ENCODE measurements at regions of chr9 and their contacts with region 1.

Region 1: DNA sequence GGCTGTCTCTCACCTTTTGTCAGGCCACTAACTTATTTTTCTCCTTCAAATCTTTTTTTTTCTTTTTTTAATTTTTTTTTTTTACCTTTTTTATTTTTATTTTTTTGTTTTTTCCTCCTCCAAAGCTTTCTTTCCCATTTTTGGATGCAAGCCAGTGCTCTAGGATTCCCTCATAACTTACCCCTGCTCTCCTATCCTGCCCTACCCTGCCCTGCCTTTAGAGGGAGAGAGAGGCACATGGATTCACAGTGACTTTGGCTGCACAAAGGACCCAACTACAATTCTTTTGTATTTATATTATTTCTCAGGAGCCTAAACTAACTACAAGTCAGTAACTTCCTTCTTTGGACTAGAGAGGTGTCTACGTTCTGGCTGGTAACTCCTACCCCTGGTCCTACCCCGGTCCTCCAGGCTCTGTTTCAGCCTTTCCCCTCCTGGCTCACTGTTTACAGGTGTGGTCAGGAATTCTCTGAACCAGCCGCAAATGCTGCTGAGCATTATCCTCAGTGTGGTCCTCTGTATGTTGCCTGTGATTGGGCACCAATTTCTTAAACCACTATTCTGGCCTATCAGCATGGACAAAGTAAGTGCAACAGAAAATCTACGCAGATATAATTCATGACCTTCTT is 8.4 kb upstream of the RUSC2 start:
- DNase-seq: no peak
- ATAC-seq: peak; percentile 66
- H3K4me3 Mint-ChIP-seq: no peak overlapping the region
- H3K27ac Mint-ChIP-seq: no peak overlapping the region
- H3K4me1 Mint-ChIP-seq: no peaks in the 10 kb centered on the region
- H3K27me3 Mint-ChIP-seq: peaks cover 10% of the 10 kb centered on the region
- CTCF ChIP-seq: no peak

Region 2: DNA sequence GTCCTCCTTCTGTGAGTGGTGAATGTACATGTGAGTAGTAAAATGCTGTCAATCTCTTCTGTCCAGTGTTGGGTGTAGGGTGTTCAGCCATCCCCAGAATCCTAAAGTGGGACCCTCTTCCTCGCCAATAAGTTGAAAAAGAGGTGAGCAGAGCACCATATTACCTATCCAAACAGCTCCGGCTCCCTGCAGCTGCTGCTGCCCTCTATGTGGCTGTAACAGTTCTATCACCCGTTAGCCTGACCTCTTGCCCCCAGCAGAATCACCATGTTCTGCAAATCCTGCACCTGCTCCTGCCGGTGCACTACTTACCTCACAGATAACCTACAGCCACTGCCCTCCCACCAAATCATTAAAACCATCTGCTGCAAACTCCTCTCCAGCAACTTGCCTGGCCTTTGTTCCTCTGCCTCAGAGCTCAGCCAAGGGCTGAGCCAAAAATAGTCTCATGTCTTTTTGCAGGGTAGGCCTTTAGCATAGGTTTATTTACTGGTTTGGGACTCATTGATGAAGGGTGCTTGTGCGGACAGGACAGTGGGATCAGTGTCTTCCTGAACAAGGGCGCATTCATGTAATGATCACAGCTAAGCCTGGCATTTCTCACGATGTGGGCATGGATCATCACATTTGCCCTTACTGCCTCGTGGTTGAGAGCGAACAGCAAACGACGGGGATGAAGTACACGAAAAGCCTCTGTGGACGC is 721.9 kb before region 1 on chr9:
- CTCF ChIA-PET with region 1: interaction called, 3 read pairs
- POLR2A ChIA-PET with region 1: no interaction called
- intact Hi-C with region 1: loop called (anchors 5 kb)
- DNase-seq: no peak
- ATAC-seq: no peak
- H3K4me3 Mint-ChIP-seq: no peak overlapping the region
- H3K27ac Mint-ChIP-seq: no peak overlapping the region
- H3K4me1 Mint-ChIP-seq: no peaks in the 10 kb centered on the region
- H3K27me3 Mint-ChIP-seq: peaks cover 31% of the 10 kb centered on the region
- CTCF ChIP-seq: no peak

Region 3: DNA sequence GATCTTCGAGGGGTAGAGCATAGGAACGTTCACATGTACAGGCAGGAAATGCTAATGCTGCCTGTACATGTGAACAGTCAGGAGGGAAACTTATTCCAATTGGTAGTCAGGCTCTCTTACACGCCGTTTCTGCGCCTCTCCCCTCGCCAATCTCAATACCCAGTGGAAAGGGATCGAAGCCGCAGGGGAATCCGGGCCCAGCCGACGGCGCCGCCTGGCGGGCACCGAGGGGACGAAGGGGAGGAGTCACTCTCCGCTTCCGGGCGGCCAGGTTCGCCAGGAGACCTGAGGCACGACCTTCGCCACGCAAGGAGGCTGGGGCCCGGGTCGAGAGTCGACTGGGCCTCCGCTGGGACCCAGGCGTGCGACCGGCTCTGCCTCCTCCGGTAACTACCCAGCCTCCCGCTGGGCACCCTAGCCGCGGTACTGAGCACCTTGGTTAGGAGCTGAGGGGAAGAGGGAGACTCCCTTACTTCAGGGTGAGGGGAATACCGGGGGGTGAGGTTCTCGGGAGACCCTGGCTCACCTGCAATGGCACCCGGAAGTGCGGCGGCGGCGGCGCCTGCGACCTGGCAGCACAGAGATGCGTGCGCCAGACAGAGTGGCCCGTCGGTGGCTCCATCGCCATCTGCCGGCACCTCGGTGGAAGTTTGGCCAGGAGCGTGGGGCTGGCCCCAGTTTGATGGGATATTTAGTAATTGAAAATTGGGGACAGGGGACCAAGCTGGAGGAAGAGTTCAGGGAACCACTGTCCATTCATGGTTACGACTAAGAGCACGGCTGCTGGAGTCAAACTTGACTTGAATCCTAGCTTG is 385.2 kb before region 1 on chr9 and contains the start of gene PIGO:
- CTCF ChIA-PET with region 1: no interaction called
- POLR2A ChIA-PET with region 1: no interaction called
- intact Hi-C with region 1: loop called (anchors 1 kb)
- DNase-seq: peak; percentile 81
- ATAC-seq: peak; percentile 92
- H3K4me3 Mint-ChIP-seq: peak within 1 kb of the TSS; percentile 87
- H3K27ac Mint-ChIP-seq: peak within 1 kb of the TSS; percentile 93
- H3K4me1 Mint-ChIP-seq: peaks cover 30% of the 10 kb centered on the region
- H3K27me3 Mint-ChIP-seq: no peaks in the 10 kb centered on the region
- CTCF ChIP-seq: peak; percentile 60
- total RNA-seq, gene PIGO: 30.4 and 34.1 TPM in 2 replicates

Region 4: GRCh38 chr9:35395076-35395705 is 86.3 kb before region 1 on chr9:
- CTCF ChIA-PET with region 1: no interaction called
- POLR2A ChIA-PET with region 1: no interaction called
- intact Hi-C with region 1: no loop called
- DNase-seq: no peak
- ATAC-seq: no peak
- H3K4me3 Mint-ChIP-seq: no peak overlapping the region
- H3K27ac Mint-ChIP-seq: no peak overlapping the region
- H3K4me1 Mint-ChIP-seq: no peaks in the 10 kb centered on the region
- H3K27me3 Mint-ChIP-seq: peaks cover 6% of the 10 kb centered on the region
- CTCF ChIP-seq: no peak

Region 5: GRCh38 chr9:35423499-35423898 is 58.0 kb before region 1 on chr9:
- CTCF ChIA-PET with region 1: no interaction called
- POLR2A ChIA-PET with region 1: no interaction called
- intact Hi-C with region 1: no loop called
- DNase-seq: no peak
- ATAC-seq: no peak
- H3K4me3 Mint-ChIP-seq: no peak overlapping the region
- H3K27ac Mint-ChIP-seq: no peak overlapping the region
- H3K4me1 Mint-ChIP-seq: no peaks in the 10 kb centered on the region
- H3K27me3 Mint-ChIP-seq: peaks cover 31% of the 10 kb centered on the region
- CTCF ChIP-seq: no peak